ENCODE measurements at regions of chr11 and their contacts with region 1.

Region 1: DNA sequence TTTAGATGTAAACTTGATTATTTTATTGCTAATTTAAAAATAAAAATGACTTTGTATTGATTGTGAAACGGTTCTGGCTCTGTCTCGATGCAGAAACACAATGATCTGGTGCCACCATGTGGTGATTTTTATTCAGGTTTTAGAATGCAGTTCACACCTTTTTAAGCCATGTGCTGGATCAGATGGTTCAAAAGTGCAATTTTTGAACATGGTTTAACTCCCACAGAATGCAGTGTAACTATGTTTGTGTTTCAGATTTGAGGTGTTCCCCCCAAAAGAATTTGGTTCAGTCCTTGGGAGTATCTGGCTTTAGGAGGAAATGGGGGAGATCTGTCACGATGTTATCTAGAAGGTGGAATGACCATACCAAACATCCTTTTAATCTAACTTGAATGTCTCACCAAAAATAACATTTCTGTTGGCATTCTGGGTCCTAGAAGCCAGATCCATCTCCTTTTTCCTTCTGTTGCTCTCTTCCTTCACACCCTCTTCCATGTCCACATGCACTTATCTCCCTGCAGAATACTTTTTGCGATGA is 7.9 kb downstream of the MRPL16 start:
- DNase-seq: no peak
- H3K4me3 ChIP-seq: no peak overlapping the region
- H3K27ac ChIP-seq: peak overlapping the region; percentile 74
- H3K4me1 ChIP-seq: peaks cover 19% of the 10 kb centered on the region
- H3K27me3 ChIP-seq: no peaks in the 10 kb centered on the region
- CTCF ChIP-seq: peak; percentile 80

Region 2: GRCh38 chr11:59753650-59754493 is 48.8 kb before region 1 on chr11:
- intact Hi-C with region 1: loop called (anchors 2 kb)
- DNase-seq: peak; percentile 87
- H3K4me3 ChIP-seq: peak overlapping the region; percentile 97
- H3K27ac ChIP-seq: peak overlapping the region; percentile 98
- H3K4me1 ChIP-seq: peaks cover 36% of the 10 kb centered on the region
- H3K27me3 ChIP-seq: no peaks in the 10 kb centered on the region
- CTCF ChIP-seq: peak; percentile 93

Region 3: GRCh38 chr11:60165538-60165937 is 362.8 kb after region 1 on chr11:
- intact Hi-C with region 1: no loop called
- DNase-seq: no peak
- H3K4me3 ChIP-seq: no peak overlapping the region
- H3K27ac ChIP-seq: no peak overlapping the region
- H3K4me1 ChIP-seq: no peaks in the 10 kb centered on the region
- H3K27me3 ChIP-seq: no peaks in the 10 kb centered on the region
- CTCF ChIP-seq: no peak